ENCODE measurements at regions of chrX and their contacts with region 1.

Region 1: DNA sequence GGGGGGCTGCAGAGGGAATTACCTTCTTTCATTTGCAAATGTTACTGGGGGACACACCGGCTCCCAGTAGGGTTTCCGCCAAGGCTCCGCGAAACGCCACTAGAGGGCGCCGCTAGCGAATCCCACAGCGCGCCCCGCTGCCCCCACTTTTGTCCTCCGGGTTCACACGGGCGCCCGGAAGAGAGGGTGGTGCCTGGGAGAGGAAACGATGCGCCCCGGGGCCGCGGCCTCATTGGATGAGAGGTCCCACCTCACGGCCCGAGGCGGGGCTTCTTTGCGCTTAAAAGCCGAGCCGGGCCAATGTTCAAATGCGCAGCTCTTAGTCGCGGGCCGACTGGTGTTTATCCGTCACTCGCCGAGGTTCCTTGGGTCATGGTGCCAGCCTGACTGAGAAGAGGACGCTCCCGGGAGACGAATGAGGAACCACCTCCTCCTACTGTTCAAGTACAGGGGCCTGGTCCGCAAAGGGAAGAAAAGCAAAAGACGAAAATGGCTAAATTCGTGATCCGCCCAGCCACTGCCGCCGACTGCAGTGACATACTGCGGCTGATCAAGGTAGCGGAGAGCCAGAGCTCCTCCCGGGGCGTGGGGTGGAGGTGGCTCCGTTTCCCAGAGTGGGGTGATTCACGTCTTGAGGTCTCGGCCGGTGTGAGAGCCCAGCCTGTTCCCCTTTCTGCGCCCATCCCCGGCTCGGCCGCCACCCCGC is at the start of gene SAT1:
- DNase-seq: peak; percentile 71 to 97
- ATAC-seq: peak; percentile 80 to 84
- H3K4me3 ChIP-seq: peak within 1 kb of the TSS; percentile 86
- H3K27ac ChIP-seq: peak within 1 kb of the TSS; percentile 94 to 96
- H3K4me1 ChIP-seq: peaks cover 42% of the 10 kb centered on the region
- CTCF ChIP-seq: peak; percentile 80
- EP300 ChIP-seq: peak in 1 of 2 experiments; percentile 35; a peak in 1 of 5 replicates
- POLR2A ChIP-seq: peak; percentile 99
- RAD21 ChIP-seq: peak; percentile 73 to 88
- polyA plus RNA-seq, gene SAT1: 2,314 and 3,185 TPM in 2 replicates

Region 2: DNA sequence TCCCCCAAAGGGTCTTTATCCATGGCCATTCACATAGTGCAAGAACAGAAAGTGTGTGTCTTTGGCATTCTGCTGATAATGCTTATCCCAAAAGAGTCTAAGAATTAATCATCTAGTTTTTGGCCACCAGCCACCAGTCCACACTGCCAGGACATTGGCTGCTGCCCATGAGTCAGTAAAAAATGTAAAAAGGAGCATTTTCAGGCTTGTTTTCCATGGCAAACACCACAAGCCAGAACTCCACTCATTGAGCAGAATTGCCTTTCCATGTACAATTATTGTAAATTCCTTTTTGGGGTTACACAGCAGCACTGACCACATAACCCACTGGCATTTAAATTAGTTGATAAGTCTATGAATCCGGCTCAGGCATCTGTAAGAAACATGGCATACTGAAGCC is 204.9 kb before region 1 on chrX:
- CTCF ChIA-PET with region 1: no interaction called
- POLR2A ChIA-PET with region 1: no interaction called
- DNase-seq: no peak
- ATAC-seq: no peak
- H3K4me3 ChIP-seq: no peak overlapping the region
- H3K27ac ChIP-seq: no peak overlapping the region
- H3K4me1 ChIP-seq: no peaks in the 10 kb centered on the region
- CTCF ChIP-seq: no peak
- EP300 ChIP-seq: no peak
- POLR2A ChIP-seq: no peak
- RAD21 ChIP-seq: no peak

Region 3: DNA sequence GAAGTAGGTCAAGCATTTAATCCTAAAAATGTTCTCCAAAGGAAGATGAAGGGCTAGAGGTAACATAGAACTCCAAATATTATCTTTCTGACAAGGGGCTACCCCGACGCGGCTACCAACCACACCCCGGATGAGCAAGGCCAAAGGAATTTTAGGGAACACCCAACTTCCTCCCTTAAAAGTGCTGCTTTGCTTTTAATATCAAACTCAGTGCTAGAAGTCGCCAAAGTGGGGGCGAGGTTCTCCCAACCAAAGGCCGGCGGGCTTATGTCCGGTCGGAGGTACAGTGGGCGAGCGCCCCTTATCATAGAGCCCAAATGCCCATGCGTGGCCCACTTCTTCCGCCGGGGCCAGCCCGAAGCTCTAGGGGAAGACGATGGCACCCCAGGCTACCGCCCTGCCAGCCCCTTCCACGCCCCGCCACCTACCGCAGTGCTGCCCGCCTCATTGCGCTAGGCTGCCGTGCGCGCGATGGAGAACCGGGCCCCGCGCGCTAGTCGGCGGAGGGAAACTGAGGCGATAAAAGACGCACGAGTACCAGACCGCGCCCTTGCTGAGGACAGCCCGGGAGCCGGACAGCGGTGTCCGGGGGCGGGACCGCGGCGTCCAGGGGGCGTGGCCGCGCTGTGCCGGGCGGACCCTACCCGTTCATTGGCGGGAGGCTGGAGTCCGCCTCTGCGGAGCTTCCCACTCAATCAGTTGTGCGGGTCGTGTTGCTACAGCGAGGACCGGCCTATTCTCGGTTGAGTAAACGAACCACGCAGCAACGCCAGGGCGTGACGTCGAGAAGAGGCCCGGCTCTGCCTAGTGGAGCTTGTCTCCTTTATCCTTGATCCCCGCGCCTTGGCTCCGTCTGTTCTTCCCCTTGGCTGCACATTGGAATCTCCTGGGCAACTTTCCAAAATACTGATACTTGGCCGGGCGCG is 40.1 kb before region 1 on chrX and contains the start of gene ACOT9:
- CTCF ChIA-PET with region 1: interaction called, 7 read pairs
- POLR2A ChIA-PET with region 1: interaction called, 78 read pairs
- DNase-seq: peak; percentile 89 to 98
- ATAC-seq: peak; percentile 98
- H3K4me3 ChIP-seq: peak within 1 kb of the TSS; percentile 80
- H3K27ac ChIP-seq: peak within 1 kb of the TSS; percentile 91 to 93
- H3K4me1 ChIP-seq: peaks cover 20% of the 10 kb centered on the region
- CTCF ChIP-seq: no peak
- EP300 ChIP-seq: no peak
- POLR2A ChIP-seq: peak; percentile 65
- RAD21 ChIP-seq: no peak
- polyA plus RNA-seq, gene ACOT9: 83.0 and 110 TPM in 2 replicates

Region 4: DNA sequence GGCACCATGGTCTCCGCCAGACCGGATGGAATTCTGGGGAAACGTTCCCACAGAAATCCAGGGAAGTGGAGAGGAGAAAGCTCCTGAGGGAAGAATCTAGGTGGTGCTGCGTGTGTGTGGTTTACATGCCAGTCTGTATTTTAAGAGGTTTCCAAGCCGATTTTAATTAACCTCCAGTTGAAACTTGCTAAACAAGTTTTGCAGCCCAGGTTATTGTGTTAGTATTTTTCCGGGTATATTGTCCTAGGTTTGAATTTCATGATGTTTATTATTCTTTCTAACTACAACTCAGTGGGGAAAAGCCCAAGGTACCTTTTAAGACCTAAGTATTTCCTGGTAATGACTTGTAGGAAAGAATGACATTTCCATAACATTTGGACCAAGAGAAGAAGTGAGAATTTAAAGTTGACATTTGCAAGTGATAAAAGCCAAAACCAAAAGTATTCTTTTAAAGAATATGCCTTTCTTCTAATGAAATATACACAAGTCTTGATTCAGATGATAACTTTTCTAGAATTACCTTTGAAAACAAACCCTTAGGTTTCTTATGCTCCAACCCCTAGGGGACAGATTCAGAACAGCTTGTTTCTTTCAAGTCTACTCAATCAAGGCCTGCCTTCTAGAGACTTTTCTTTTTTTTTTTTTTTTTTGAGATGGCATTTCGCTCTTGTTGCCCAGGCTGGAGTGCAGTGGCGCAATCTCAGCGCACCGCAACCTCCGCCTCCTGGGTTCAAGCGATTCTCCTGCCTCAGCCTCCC is 14.5 kb after region 1 on chrX:
- CTCF ChIA-PET with region 1: interaction called, 22 read pairs
- POLR2A ChIA-PET with region 1: interaction called, 41 read pairs
- DNase-seq: no peak
- ATAC-seq: peak in 1 of 2 experiments; percentile 59; a peak in 3 of 6 replicates
- H3K4me3 ChIP-seq: no peak overlapping the region
- H3K27ac ChIP-seq: peak overlapping the region; percentile 88 to 98
- H3K4me1 ChIP-seq: peaks cover 34% of the 10 kb centered on the region
- CTCF ChIP-seq: no peak
- EP300 ChIP-seq: no peak
- POLR2A ChIP-seq: no peak
- RAD21 ChIP-seq: no peak

Region 5: DNA sequence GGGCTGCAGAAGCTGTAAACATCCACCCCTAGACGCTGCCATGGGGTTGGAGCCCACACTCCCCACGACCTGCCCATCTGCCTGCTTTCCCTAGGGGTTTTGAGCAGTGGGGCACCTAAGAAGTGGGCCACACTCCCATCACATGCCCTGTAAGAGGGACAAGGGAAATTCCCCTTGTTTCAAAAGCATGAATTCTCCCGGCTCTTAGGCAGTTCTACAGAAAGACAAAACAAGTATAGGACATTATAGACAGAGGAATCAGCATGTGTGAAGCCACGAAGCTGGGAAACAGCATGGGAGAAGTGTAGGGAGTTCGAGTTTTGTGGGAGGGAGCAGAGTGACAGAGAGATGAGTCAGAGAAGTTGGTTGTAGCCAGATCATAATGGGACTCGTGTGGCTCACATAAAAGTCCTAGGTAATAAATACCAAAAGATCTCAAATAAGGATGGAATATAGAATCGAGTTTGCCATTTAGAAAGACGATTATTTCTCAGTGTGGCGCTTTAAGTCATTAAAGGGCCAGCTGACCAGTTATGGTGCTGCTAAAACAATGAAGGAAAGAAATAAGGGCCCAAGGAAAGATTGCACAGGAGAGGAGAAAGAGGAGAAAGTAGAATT is 100.8 kb after region 1 on chrX:
- CTCF ChIA-PET with region 1: interaction called, 21 read pairs
- POLR2A ChIA-PET with region 1: interaction called, 46 read pairs
- DNase-seq: peak; percentile 76 to 79
- ATAC-seq: peak; percentile 87 to 93
- H3K4me3 ChIP-seq: no peak overlapping the region
- H3K27ac ChIP-seq: peak overlapping the region; percentile 88 to 97
- H3K4me1 ChIP-seq: peaks cover 76% of the 10 kb centered on the region
- CTCF ChIP-seq: no peak
- EP300 ChIP-seq: no peak
- POLR2A ChIP-seq: no peak
- RAD21 ChIP-seq: no peak

Region 6: DNA sequence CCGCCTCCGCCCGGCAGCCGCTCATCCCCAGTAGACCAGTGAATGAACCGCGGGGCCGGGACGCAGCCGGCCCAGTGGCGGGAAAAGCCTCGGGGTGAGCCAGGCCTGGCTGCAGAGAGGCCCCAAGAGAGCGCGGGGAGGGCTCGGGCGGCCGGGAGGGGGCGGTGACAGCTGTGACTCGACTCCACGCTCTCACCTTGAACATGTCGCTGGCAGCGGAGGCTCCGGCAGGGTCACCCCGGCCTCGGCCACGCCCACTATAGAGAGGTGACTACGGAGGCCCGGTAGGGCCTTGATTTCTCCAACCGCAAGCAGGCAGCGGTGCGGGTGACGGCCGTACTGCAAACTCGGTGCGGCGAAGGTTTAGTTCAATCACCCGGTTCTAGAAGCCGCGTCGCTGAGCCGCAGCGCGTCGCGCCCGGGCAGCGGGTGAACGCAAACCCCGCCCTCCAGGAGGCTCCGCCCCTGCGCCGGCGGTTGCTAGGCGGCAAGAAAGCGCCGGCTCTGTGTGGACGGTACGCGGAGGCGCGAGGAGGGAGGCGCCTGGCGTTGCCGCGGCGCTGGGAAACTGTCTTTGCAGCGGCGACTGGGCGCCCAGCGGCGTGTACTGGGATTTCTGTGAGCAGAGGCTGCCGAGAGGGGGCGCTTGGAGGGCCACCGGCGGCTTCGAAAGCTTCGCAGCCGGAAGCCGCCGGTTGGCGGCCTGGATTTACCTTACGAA is 124.6 kb after region 1 on chrX and contains the starts of genes APOO and CXorf58:
- CTCF ChIA-PET with region 1: interaction called, 122 read pairs
- POLR2A ChIA-PET with region 1: interaction called, 218 read pairs
- DNase-seq: peak; percentile 82 to 96
- ATAC-seq: peak; percentile 97 to 98
- H3K4me3 ChIP-seq: peak within 1 kb of the TSS; percentile 82
- H3K27ac ChIP-seq: peak within 1 kb of the TSS; percentile 91 to 99
- H3K4me1 ChIP-seq: peaks cover 10% of the 10 kb centered on the region; the same call in 2 of the 3 replicates
- CTCF ChIP-seq: peak; percentile 82
- EP300 ChIP-seq: no peak
- POLR2A ChIP-seq: peak; percentile 34; the same call in 1 of the 2 replicates
- RAD21 ChIP-seq: peak; percentile 57 to 64
- polyA plus RNA-seq, gene APOO: 48.5 and 59.4 TPM in 2 replicates
- polyA plus RNA-seq, gene CXorf58: 0.37 and 0.47 TPM in 2 replicates

Region 7: DNA sequence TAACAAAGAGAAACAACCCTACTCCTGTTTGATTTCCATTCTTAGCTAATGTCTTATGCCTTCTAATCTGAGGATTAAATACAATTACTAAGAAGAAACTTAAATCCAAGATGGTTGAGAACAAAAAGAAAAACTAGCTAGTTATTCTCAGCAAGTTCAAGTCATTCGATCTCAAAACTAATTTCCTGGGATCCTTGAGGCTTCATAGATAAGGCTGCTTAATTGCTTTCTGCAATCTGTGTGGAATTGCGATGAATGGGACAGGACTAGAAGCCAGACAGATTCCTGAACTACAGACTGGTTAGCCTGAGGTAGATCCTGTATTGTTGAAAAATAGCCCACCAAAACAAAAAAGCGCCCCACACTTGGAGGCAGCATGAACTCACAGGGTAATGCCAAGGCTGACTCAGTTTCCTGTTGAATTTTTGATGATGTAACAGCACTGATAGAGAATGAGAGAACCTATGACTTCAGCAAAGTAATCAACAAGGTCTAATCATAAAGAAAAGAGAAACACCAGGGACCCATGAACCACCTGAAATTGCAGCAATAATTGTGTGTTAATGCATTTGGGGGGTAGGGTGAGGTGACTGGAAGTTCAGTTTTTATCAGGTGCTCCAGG is 210.1 kb after region 1 on chrX:
- CTCF ChIA-PET with region 1: no interaction called
- POLR2A ChIA-PET with region 1: no interaction called
- DNase-seq: no peak
- ATAC-seq: no peak
- H3K4me3 ChIP-seq: no peak overlapping the region
- H3K27ac ChIP-seq: no peak overlapping the region
- H3K4me1 ChIP-seq: no peaks in the 10 kb centered on the region
- CTCF ChIP-seq: no peak
- EP300 ChIP-seq: no peak
- POLR2A ChIP-seq: no peak
- RAD21 ChIP-seq: no peak

Region 8: DNA sequence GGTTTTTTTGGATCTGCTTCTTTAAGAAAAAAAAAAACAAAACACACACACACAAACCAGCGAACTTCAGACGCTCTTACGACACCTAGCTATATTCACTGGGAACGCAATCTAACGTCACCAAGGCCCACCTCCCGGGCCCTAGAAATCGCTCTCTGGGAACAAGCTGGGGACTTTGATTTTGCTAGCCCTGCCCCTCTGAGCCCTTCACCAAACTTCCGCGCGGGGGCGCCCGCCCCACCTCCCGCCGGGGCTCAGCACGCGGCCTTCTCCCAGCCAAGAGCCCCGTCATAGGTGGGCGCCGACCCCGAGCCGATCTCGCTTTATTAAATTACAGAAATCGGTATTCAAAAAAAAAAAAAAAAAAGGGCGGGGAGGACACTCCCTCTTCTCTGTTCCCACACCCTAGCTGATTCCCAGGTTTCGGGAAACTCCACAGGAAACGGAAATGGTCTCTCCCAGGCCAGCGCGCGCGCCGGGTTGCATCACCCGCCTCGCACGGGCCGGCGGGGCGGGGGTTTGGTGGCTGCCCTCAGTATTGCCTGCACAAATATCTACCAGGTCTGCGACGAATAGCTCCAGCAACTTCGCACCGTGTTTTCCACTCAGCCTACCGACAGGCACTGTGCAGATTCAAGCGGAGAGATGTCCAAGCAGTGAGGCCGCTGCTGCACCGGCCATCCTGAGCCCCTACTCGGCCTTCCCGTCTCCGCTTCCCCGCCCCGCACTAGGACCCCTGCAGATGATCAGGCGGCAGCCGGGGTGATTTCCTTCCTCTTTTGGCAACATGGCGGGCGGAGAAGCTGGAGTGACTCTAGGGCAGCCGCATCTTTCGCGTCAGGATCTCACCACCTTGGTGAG is 271.4 kb after region 1 on chrX and contains the start of gene EIF2S3:
- CTCF ChIA-PET with region 1: interaction called, 8 read pairs
- POLR2A ChIA-PET with region 1: interaction called, 27 read pairs
- DNase-seq: peak; percentile 77 to 98
- ATAC-seq: peak; percentile 94 to 98
- H3K4me3 ChIP-seq: no peak within 1 kb of the TSS
- H3K27ac ChIP-seq: no peak within 1 kb of the TSS
- H3K4me1 ChIP-seq: peaks cover 9% of the 10 kb centered on the region; the same call in 1 of the 3 replicates
- CTCF ChIP-seq: peak; percentile 71
- EP300 ChIP-seq: no peak
- POLR2A ChIP-seq: peak; percentile 67
- RAD21 ChIP-seq: peak; percentile 41 to 46; a peak in 4 of 5 replicates
- polyA plus RNA-seq, gene EIF2S3: 214 and 219 TPM in 2 replicates

Region 9: DNA sequence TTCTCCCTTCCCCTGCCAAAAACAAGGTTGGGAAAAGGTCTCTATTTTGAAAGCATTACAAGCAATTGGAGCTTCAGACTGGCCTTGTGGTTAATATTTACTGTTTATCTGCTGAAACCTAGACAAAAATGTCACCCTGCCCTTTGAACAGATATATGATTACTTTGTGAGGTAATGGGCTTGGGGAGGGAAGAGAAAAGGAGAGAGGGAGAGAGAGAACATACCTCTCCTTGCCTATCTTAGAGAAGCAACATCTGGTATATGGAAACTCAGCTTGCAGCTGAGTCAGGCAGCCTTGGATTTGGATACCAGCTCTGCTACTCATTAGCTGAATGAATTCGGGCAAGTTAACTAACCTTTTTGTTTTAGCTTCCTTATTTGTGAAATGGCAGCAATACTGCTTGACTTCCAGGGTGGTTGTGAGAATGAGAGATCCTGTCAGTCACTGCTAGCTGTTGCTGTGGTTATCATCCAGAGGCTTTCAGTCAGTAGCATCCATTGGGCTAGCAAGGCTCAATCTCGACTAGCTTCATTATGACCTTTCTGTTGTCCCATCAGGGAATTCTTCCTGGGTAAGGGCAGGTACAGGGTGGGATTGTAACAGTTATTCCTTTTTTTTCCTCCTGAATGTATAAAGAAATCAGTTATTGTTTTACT is 407.6 kb after region 1 on chrX:
- CTCF ChIA-PET with region 1: no interaction called
- POLR2A ChIA-PET with region 1: no interaction called
- DNase-seq: peak in 1 of 2 experiments; percentile 61
- ATAC-seq: peak; percentile 42 to 58; a peak in 4 of 6 replicates
- H3K4me3 ChIP-seq: no peak overlapping the region
- H3K27ac ChIP-seq: peak overlapping the region; percentile 43 to 60; a peak in 4 of 6 replicates
- H3K4me1 ChIP-seq: peaks cover 61% of the 10 kb centered on the region
- CTCF ChIP-seq: no peak
- EP300 ChIP-seq: no peak
- POLR2A ChIP-seq: no peak
- RAD21 ChIP-seq: no peak

Measured in A549 (cell line).